Mammary epithelial cell (primary cell): ENCODE measurements at regions of chr17 and their contacts with region 1.

Region 1: GRCh38 chr17:41496820-41497408 is 7.2 kb upstream of the KRT36 start:
- DNase-seq: peak; percentile 88
- H3K4me3 ChIP-seq: no peak overlapping the region
- H3K27ac ChIP-seq: peak overlapping the region; percentile 52
- H3K4me1 ChIP-seq: peaks cover 49% of the 10 kb centered on the region
- H3K27me3 ChIP-seq: no peaks in the 10 kb centered on the region
- CTCF ChIP-seq: peak; percentile 97

Region 2: GRCh38 chr17:40854159-40854814 is 642.6 kb before region 1 on chr17:
- CTCF ChIA-PET with region 1: no interaction called
- dilution Hi-C with region 1: no loop called
- in situ Hi-C with region 1: no loop called
- intact Hi-C with region 1: loop called (anchors 1 kb)
- DNase-seq: peak; percentile 84
- H3K4me3 ChIP-seq: no peak overlapping the region
- H3K27ac ChIP-seq: no peak overlapping the region
- H3K4me1 ChIP-seq: peaks cover 20% of the 10 kb centered on the region
- H3K27me3 ChIP-seq: no peaks in the 10 kb centered on the region
- CTCF ChIP-seq: no peak

Region 3: DNA sequence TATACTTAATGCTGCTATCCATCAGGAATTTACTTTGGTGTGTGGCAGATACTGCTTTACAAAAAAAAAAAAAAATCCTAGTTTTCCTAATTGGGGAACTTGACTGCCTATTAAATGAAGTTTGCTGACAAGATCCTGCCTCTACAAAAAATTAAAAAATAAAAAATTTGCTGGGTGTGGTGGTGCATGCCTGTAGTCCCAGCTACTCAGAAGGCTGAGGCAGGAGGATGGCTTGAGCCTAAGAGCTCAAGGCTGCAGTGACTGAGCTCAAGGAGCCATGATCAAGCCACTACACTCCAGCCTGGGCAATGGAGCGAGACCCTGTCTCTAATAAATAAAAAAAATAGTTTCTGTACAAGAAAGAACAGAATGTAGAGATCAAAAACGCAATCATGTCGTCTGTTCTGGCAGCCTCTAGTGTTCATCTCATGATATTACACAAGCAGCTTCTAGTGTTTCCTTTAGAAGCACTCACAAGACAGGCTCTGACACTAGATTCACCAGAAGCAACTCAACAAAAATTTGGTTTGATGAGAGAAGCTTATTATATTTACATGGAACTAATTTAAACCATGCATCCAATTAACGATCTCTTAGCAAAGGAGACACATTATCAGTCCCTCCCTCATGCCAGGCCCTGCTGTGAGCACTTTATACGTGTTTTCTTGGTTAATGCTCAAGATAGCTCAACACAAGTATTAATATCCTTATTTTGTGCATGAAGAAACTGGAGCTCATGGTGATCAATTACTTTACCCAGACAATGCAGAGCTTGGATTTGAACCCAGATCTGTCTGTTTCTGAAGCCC is 174.6 kb before region 1 on chr17:
- CTCF ChIA-PET with region 1: no interaction called
- dilution Hi-C with region 1: no loop called
- in situ Hi-C with region 1: loop called in 1 of 2 experiments (anchors 10 kb)
- intact Hi-C with region 1: loop called (anchors 1 kb)
- DNase-seq: peak; percentile 61
- H3K4me3 ChIP-seq: no peak overlapping the region
- H3K27ac ChIP-seq: peak overlapping the region; percentile 39
- H3K4me1 ChIP-seq: peaks cover 3% of the 10 kb centered on the region
- H3K27me3 ChIP-seq: no peaks in the 10 kb centered on the region
- CTCF ChIP-seq: peak; percentile 95 to 98

Region 4: DNA sequence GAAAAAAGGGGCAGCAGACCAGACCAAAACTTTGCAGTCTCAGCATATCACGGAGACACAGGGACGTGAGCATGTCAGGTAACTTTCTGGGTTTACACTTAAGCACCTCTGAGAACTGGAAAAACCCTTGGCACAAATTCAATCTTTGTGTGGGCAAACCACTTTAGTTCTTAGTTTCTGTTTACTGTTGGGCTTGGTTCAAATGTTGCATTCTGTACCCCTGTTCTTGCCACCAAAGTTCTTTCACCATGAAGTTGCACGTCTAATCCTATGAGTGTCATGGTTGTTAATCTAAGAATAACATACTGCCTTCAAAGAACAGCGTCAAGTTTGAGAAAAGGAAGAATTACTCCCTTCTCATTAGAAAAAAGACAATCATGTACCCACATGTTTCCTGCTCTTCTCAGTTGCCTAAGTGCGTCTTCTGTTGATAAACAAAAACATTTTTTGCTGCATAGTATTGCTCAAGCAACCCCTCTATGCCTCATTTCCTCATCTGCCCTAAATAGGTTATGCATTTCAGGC is 157.9 kb before region 1 on chr17:
- CTCF ChIA-PET with region 1: no interaction called
- dilution Hi-C with region 1: no loop called
- in situ Hi-C with region 1: no loop called
- intact Hi-C with region 1: no loop called
- DNase-seq: peak; percentile 93
- H3K4me3 ChIP-seq: no peak overlapping the region
- H3K27ac ChIP-seq: peak overlapping the region; percentile 68
- H3K4me1 ChIP-seq: peaks cover 15% of the 10 kb centered on the region
- H3K27me3 ChIP-seq: no peaks in the 10 kb centered on the region
- CTCF ChIP-seq: no peak

Region 5: GRCh38 chr17:41403798-41404671 is 92.9 kb before region 1 on chr17:
- CTCF ChIA-PET with region 1: no interaction called
- dilution Hi-C with region 1: loop called (anchors 5 kb)
- in situ Hi-C with region 1: no loop called
- intact Hi-C with region 1: loop called (anchors 1 kb)
- DNase-seq: peak; percentile 100
- H3K4me3 ChIP-seq: no peak overlapping the region
- H3K27ac ChIP-seq: peak overlapping the region; percentile 94
- H3K4me1 ChIP-seq: peaks cover 32% of the 10 kb centered on the region
- H3K27me3 ChIP-seq: no peaks in the 10 kb centered on the region
- CTCF ChIP-seq: no peak

Region 6: DNA sequence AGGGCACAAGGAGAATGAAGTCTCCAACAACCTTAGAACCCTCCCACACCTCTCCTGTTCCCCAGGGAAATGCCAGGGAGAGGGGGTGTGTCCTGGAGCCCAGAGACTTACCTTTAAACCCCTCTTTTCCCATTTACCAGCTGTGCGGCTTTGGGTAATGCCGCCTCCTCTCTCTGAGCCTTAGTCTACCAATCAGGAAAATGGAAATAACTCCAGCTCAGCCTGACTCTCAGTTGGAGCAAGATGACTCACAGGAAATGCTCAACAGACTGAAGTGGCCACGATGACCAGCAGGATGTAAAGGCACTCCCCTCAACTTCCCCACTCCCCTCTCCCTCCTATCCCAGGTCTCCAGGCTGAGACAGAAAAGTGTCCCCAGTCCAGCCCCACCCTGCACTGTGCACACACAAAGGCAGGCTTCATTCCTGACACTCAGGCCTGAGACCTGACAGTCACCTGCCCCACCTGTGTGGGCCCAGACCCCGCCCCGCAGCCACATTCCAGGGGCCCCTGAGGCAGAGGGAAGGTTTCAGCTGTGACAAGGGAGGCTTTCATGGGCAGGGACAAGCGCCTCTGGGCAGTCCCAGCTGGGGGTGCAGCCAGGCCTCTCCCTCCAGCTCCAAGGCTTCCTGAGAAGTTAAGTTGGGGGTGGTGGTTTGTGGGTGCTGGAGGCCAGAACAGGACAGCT is 24.8 kb after region 1 on chr17:
- CTCF ChIA-PET with region 1: interaction called, 3 read pairs
- dilution Hi-C with region 1: no loop called
- in situ Hi-C with region 1: no loop called
- intact Hi-C with region 1: loop called (anchors 1 kb)
- DNase-seq: peak; percentile 99
- H3K4me3 ChIP-seq: peak overlapping the region in 1 of 3 experiments; percentile 19
- H3K27ac ChIP-seq: peak overlapping the region; percentile 94
- H3K4me1 ChIP-seq: peaks cover 62% of the 10 kb centered on the region
- H3K27me3 ChIP-seq: no peaks in the 10 kb centered on the region
- CTCF ChIP-seq: no peak